Calu3 (cell line): ENCODE measurements at regions of chr12 and their contacts with region 1.

Region 1: DNA sequence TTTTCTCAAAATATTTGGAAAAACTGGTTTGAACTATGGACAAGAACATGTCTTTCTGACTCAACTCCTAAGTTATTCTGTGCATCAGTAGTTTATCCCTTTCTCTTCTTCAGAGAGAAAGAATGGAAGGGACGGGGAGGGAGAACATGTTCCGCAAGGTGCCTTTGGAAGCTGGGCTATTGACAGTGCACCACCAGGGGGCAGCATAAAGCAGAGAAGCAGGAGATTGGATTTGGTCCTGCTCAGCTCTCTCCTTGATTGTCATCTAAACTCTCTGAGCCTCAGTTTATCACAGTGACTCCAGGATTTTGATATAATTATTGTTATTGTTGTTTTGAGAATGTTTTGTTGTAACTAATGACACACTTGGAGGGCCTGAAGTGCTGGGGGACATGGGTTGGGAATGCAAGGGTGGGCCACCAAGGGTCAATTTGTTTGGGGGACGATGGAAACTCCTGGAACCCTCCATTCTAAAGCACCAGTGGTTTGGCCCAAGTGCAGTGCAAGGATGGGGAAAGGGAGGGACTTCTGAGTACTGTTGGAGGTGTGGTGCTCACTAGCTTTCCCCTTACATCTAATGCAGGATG is 45.3 kb upstream of the ANO6 start:
- DNase-seq: peak; percentile 85
- H3K4me3 Mint-ChIP-seq: no peak overlapping the region
- H3K27ac Mint-ChIP-seq: no peak overlapping the region
- H3K4me1 Mint-ChIP-seq: no peaks in the 10 kb centered on the region
- H3K27me3 Mint-ChIP-seq: no peaks in the 10 kb centered on the region
- CTCF ChIP-seq: peak; percentile 78

Region 2: GRCh38 chr12:45260104-45260815 is 89.7 kb after region 1 on chr12:
- CTCF ChIA-PET with region 1: no interaction called
- intact Hi-C with region 1: no loop called
- DNase-seq: no peak
- H3K4me3 Mint-ChIP-seq: no peak overlapping the region
- H3K27ac Mint-ChIP-seq: peak overlapping the region; percentile 73
- H3K4me1 Mint-ChIP-seq: peaks cover 24% of the 10 kb centered on the region
- H3K27me3 Mint-ChIP-seq: no peaks in the 10 kb centered on the region
- CTCF ChIP-seq: no peak

Region 3: DNA sequence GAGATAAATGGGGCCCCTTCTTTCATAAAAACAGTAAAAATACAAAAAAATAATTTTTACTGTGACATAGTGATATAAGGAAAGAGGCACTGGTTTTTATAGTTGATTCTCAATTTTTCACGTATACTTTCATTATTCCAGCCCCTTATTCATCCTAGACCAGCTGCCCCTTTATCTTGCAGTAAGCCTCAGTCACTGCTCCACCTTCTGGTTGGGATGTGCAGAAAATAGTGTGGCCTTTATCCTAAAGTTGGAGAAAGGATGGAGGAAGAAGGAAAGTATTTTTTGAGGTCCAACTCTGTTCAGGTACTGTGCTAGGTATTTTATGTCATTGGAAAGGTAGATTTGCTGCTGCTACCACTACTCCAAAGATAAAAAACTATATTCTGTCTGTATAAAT is 218.0 kb after region 1 on chr12:
- CTCF ChIA-PET with region 1: interaction called, 4 read pairs
- intact Hi-C with region 1: loop called (anchors 2 kb)
- DNase-seq: peak; percentile 8
- H3K4me3 Mint-ChIP-seq: no peak overlapping the region
- H3K27ac Mint-ChIP-seq: no peak overlapping the region
- H3K4me1 Mint-ChIP-seq: no peaks in the 10 kb centered on the region
- H3K27me3 Mint-ChIP-seq: no peaks in the 10 kb centered on the region
- CTCF ChIP-seq: no peak

Region 4: DNA sequence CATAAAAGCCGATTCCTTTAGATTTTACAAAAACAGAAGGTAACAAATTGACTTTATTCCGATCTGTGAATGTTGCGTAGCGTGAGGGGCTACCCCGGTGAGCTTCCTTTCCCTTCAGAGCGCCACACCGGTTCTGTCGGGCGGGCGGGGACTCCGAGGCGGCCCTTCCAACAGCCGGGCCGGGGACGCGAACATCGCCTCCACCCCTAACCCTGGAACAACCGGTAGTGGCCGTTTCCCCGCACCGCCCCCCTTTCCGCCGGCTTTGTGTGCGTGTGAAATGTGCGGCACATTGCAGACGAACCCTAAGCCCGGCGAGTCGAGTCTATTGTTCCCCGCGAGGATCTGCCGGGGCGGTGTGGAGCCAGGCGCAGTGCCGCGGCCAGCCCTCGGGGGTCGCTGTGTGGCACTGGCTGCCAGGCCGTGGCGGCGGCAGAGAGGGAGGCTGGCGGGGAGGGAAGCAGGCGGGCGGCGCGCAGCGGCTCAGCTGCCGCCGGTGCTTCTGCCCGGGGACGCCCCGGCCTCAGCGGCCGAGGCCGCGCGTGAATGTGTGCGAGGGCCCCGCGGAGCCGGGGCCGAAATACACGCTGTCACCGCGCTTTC is 558.2 kb after region 1 on chr12:
- CTCF ChIA-PET with region 1: no interaction called
- intact Hi-C with region 1: loop called (anchors 5 kb)
- DNase-seq: peak; percentile 93
- H3K4me3 Mint-ChIP-seq: peak overlapping the region; percentile 97
- H3K27ac Mint-ChIP-seq: peak overlapping the region; percentile 89
- H3K4me1 Mint-ChIP-seq: no peaks in the 10 kb centered on the region
- H3K27me3 Mint-ChIP-seq: no peaks in the 10 kb centered on the region
- CTCF ChIP-seq: peak; percentile 74

Region 5: DNA sequence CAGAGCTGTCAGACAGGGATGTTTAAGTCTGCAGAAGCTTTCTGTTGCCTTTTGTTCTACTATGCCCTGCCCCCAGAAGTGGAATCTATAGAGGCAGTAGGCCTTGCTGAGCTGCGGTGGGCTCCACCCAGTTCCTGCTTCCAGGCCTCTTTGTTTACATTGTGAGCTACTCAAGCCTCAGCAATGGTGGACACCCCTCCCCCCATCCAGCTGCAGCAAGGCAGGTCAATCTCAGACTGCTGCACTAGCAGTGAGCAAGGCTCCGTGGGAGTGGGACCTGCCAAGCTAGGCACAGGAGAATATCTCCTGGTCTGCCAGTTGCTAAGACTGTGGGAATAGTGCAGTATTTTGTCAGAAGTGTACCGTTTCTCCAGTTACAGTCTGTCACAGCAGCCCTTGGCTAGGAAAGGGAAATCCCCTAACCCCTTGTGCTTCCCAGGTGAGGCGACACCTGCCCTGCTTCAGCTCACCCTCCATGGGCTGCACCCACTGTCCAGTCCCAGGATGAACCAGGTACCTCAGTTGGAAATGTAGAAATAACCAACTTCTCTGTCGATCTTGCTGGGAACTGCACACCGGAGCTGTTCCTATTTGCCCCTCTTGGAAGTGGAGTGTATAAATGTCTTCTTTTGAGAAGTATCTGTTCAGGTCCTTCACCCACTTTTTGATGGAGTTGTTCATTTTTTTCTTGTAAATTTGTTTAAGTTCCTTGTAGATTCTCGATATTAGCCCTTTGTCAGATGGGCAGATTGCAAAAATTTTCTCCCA is 1415.5 kb after region 1 on chr12:
- CTCF ChIA-PET with region 1: no interaction called
- intact Hi-C with region 1: no loop called
- DNase-seq: peak; percentile 80
- H3K4me3 Mint-ChIP-seq: no peak overlapping the region
- H3K27ac Mint-ChIP-seq: peak overlapping the region; percentile 37
- H3K4me1 Mint-ChIP-seq: peaks cover 43% of the 10 kb centered on the region
- H3K27me3 Mint-ChIP-seq: no peaks in the 10 kb centered on the region
- CTCF ChIP-seq: no peak